ENCODE measurements at regions of chr1 and their contacts with region 1.

Region 1: GRCh38 chr1:85576642-85577418 is 3.7 kb upstream of the CCN1 start:
- DNase-seq: peak; percentile 93
- H3K4me3 Mint-ChIP-seq: peak overlapping the region; percentile 76
- H3K27ac Mint-ChIP-seq: peak overlapping the region; percentile 92
- H3K4me1 Mint-ChIP-seq: peaks cover 31% of the 10 kb centered on the region
- H3K27me3 Mint-ChIP-seq: no peaks in the 10 kb centered on the region
- CTCF ChIP-seq: peak; percentile 89

Region 2: GRCh38 chr1:85328713-85329376 is 248.0 kb before region 1 on chr1:
- CTCF ChIA-PET with region 1: no interaction called
- intact Hi-C with region 1: loop called (anchors 5 kb)
- DNase-seq: peak; percentile 67
- H3K4me3 Mint-ChIP-seq: no peak overlapping the region
- H3K27ac Mint-ChIP-seq: peak overlapping the region; percentile 90
- H3K4me1 Mint-ChIP-seq: peaks cover 86% of the 10 kb centered on the region
- H3K27me3 Mint-ChIP-seq: no peaks in the 10 kb centered on the region
- CTCF ChIP-seq: no peak

Region 3: DNA sequence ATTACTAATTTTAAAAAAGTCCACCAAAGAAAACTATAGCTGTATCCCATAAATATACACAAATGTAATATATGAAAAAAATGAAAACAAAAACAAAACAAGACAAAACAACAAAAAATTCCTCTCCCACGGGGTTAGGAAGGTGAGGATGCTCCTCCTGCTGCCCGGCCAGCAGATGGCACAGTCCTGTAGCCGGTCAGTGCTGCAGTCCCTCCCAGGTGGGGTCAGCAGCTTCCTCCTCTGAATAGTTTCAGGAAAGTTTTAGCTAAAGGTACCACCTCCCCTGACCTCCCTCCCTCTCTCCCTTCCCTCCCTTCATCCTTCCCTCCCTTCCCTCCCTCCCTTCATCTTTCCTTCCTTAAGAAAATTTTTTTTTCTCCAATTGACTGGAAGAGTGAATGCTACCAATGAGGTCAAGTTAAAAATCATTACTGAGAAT is 232.6 kb before region 1 on chr1:
- CTCF ChIA-PET with region 1: interaction called, 10 read pairs
- intact Hi-C with region 1: no loop called
- DNase-seq: peak; percentile 78
- H3K4me3 Mint-ChIP-seq: peak overlapping the region; percentile 39
- H3K27ac Mint-ChIP-seq: peak overlapping the region; percentile 96
- H3K4me1 Mint-ChIP-seq: peaks cover 79% of the 10 kb centered on the region
- H3K27me3 Mint-ChIP-seq: no peaks in the 10 kb centered on the region
- CTCF ChIP-seq: peak; percentile 75

Region 4: GRCh38 chr1:85464497-85465098 is 112.2 kb before region 1 on chr1:
- CTCF ChIA-PET with region 1: interaction called, 5 read pairs
- intact Hi-C with region 1: loop called (anchors 5 kb)
- DNase-seq: peak; percentile 86
- H3K4me3 Mint-ChIP-seq: peak overlapping the region; percentile 79
- H3K27ac Mint-ChIP-seq: peak overlapping the region; percentile 74
- H3K4me1 Mint-ChIP-seq: peaks cover 34% of the 10 kb centered on the region
- H3K27me3 Mint-ChIP-seq: no peaks in the 10 kb centered on the region
- CTCF ChIP-seq: no peak

Region 5: GRCh38 chr1:85484264-85484663 is 92.6 kb before region 1 on chr1:
- CTCF ChIA-PET with region 1: no interaction called
- intact Hi-C with region 1: no loop called
- DNase-seq: no peak
- H3K4me3 Mint-ChIP-seq: no peak overlapping the region
- H3K27ac Mint-ChIP-seq: no peak overlapping the region
- H3K4me1 Mint-ChIP-seq: no peaks in the 10 kb centered on the region
- H3K27me3 Mint-ChIP-seq: no peaks in the 10 kb centered on the region
- CTCF ChIP-seq: no peak

Region 6: DNA sequence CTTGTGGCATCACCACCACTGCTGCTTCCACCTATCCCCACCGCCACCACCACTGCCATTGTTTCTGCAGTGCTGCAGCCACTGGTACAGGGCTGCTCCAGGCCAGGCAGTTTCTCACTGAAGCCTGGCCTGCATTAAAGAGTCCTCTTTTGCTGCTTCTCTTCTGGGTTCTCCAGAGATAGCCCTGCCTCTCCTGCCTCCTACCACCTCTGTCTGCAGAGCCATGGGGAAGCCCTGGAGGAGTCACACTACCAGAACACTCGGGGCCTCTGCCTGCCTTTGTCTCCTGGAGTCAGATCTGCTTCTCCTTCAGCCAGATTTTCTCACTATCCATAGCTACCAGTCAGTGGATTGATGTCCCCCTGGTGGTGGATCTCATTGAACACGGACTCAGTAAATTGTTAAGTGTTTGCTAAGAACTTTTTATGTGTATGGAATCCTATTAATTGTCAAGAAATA is 74.2 kb before region 1 on chr1:
- CTCF ChIA-PET with region 1: no interaction called
- intact Hi-C with region 1: loop called (anchors 5 kb)
- DNase-seq: peak; percentile 74
- H3K4me3 Mint-ChIP-seq: peak overlapping the region; percentile 22
- H3K27ac Mint-ChIP-seq: peak overlapping the region; percentile 52
- H3K4me1 Mint-ChIP-seq: peaks cover 13% of the 10 kb centered on the region
- H3K27me3 Mint-ChIP-seq: no peaks in the 10 kb centered on the region
- CTCF ChIP-seq: peak; percentile 38

Region 7: GRCh38 chr1:85692730-85693314 is 116.0 kb after region 1 on chr1:
- CTCF ChIA-PET with region 1: interaction called, 11 read pairs
- intact Hi-C with region 1: loop called (anchors 5 kb)
- DNase-seq: no peak
- H3K4me3 Mint-ChIP-seq: no peak overlapping the region
- H3K27ac Mint-ChIP-seq: peak overlapping the region; percentile 78
- H3K4me1 Mint-ChIP-seq: peaks cover 32% of the 10 kb centered on the region
- H3K27me3 Mint-ChIP-seq: no peaks in the 10 kb centered on the region
- CTCF ChIP-seq: no peak

Region 8: GRCh38 chr1:85756864-85757263 is 180.0 kb after region 1 on chr1:
- CTCF ChIA-PET with region 1: no interaction called
- intact Hi-C with region 1: no loop called
- DNase-seq: no peak
- H3K4me3 Mint-ChIP-seq: no peak overlapping the region
- H3K27ac Mint-ChIP-seq: no peak overlapping the region
- H3K4me1 Mint-ChIP-seq: no peaks in the 10 kb centered on the region
- H3K27me3 Mint-ChIP-seq: no peaks in the 10 kb centered on the region
- CTCF ChIP-seq: no peak

Measured in Calu3 (cell line).